Endothelial cell of umbilical vein (primary cell): ENCODE measurements at regions of chr2 and their contacts with region 1.

Region 1: DNA sequence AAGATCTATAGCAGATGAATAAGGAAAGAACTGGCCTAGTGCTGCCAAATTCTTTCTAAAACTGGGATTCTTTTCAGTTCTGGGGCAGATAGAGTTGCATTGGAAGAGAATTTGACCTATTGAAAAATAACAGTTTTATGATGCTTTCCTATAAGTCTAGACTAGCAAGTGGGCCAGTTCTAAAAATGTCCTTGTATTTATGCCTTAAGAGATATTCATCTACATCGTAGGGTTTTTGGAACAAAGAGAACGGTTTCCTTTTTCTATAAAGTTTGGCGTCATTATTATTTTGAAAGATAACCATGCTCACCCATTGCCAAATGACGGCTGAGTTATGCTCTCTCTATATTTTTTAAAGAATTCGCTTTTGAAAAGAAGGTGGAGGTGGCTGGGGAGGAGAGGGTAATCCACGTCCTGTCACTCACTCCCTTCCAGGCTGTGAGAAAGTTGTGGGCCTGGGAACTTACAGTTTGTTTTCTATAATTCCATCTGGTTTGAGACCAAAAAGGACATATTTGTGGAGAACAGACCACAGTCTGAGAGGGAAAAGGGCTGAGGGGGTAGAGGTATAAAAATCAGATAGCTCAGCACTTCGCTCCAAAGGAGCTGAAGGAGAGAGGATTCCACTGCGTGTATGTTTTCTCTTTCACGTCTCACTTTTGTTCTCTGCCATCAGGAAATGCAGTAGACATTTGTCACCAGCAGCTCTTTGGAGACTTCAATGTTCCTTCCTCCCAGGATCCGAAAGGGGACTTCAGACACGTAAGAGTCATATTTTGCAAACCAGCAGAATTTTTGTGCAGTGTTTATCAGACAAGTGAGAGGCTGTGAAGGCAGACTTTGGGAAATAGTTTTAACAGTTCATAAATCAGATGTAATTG is 281.9 kb upstream of the FN1 start:
- DNase-seq: peak; percentile 88
- H3K4me3 ChIP-seq: peak overlapping the region in 1 of 3 experiments; percentile 28
- H3K27ac ChIP-seq: peak overlapping the region; percentile 92
- H3K4me1 ChIP-seq: peaks cover 45% of the 10 kb centered on the region
- H3K27me3 ChIP-seq: no peaks in the 10 kb centered on the region
- CTCF ChIP-seq: no peak
- POLR2A ChIP-seq: no peak

Region 2: GRCh38 chr2:215601990-215602721 is 115.6 kb before region 1 on chr2:
- CTCF ChIA-PET with region 1: no interaction called
- POLR2A ChIA-PET with region 1: no interaction called
- dilution Hi-C with region 1: no loop called
- intact Hi-C with region 1: loop called (anchors 2 kb)
- DNase-seq: peak; percentile 97
- H3K4me3 ChIP-seq: peak overlapping the region in 1 of 3 experiments; percentile 19
- H3K27ac ChIP-seq: peak overlapping the region; percentile 85
- H3K4me1 ChIP-seq: peaks cover 24% of the 10 kb centered on the region
- H3K27me3 ChIP-seq: no peaks in the 10 kb centered on the region
- CTCF ChIP-seq: no peak
- POLR2A ChIP-seq: peak; percentile 62

Region 3: DNA sequence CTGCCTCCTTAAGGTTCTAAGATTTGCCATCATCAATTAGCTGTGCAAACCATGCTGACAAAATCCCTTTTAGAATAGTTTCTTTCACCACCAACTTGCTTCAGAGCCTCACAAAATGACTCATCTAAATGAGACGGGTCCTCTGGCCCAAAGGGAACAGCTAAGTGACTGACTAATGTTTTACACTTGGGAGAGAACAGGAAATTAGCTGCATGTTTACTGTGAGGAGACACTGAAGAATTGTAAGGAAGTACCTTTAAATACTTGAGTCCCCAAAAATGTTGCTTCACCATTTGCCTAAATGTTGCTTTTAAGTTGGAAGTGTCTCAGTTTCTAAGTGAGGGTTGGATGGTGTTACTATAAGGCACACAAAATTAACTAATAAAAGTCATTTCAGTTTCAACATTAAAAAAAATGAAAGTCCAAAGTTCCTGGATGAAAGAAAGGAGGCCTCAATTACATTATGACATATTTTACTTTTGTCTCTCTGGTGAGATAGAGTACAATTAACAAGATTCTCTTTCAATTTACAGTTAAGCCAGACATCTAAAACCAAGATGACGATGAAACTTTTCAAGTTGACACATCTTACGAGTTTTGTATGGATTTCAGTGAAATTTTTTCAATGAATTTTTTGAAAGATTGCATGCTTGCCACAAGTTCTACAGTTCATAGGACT is 52.8 kb before region 1 on chr2:
- CTCF ChIA-PET with region 1: no interaction called
- POLR2A ChIA-PET with region 1: no interaction called
- dilution Hi-C with region 1: no loop called
- intact Hi-C with region 1: loop called (anchors 2 kb)
- DNase-seq: peak; percentile 88
- H3K4me3 ChIP-seq: no peak overlapping the region
- H3K27ac ChIP-seq: peak overlapping the region; percentile 76
- H3K4me1 ChIP-seq: peaks cover 17% of the 10 kb centered on the region
- H3K27me3 ChIP-seq: no peaks in the 10 kb centered on the region
- CTCF ChIP-seq: no peak
- POLR2A ChIP-seq: no peak

Region 4: DNA sequence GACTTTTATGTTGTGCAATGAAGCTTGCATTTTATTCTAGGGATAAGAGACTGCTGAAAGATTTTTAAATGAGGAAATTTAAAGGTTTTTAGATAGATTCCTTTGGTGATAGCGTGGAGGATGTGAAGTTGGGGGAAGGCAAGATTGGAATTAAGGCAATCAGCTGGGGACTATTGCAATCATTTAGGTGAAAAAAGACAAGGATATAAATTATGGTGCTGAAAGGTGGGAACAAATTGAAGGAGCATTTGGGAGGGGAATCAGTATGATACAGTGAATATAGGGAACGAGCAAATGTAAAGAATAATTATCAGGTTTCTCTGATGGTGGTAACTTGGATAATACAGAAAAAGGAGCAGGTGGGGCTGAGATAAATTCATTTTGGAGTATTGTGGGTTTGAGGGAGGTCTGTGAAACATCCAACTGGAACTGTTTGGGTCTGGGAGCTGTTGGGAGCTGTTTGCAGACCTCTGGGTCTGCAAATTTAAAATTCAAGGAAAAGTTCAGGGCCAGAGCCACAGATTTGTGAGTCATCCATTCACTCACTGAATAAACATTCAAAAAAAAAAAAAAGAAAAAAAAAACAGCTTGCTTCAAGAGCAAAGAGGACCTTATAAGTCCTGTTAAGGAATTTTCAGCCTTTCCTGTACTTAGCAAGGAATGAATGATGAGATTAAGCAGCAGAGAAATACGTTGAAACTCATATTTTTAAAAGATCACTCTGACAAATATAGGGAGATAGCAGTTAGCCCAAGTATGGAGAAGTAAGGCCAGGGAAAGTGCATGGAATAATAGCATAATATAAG is 24.3 kb before region 1 on chr2:
- CTCF ChIA-PET with region 1: interaction called, 3 read pairs
- POLR2A ChIA-PET with region 1: no interaction called
- dilution Hi-C with region 1: no loop called
- intact Hi-C with region 1: loop called (anchors 2 kb)
- DNase-seq: peak; percentile 85
- H3K4me3 ChIP-seq: no peak overlapping the region
- H3K27ac ChIP-seq: peak overlapping the region; percentile 83
- H3K4me1 ChIP-seq: peaks cover 33% of the 10 kb centered on the region
- H3K27me3 ChIP-seq: no peaks in the 10 kb centered on the region
- CTCF ChIP-seq: no peak
- POLR2A ChIP-seq: no peak

Region 5: DNA sequence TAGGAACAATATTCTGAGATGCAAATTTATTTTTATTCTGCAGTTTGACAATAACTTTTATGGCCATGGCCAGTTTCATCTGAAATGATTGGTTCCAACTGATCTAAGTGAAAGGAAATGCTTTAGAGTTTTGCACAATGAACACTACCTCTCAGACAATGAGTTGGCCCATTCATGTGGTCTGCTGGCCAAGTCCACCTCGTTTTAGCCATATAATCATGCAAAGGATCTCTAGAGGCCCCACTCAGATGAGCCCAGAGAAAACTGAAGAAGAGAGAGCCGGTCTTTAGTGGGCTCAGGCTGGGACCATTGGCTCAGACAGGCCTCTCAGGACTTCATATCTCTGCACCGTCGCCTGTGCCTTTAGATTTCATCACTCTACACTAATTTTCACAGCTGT is 41.0 kb after region 1 on chr2:
- CTCF ChIA-PET with region 1: no interaction called
- POLR2A ChIA-PET with region 1: interaction called, 3 read pairs
- dilution Hi-C with region 1: no loop called
- intact Hi-C with region 1: loop called (anchors 1 kb)
- DNase-seq: peak; percentile 87
- H3K4me3 ChIP-seq: no peak overlapping the region
- H3K27ac ChIP-seq: peak overlapping the region; percentile 69
- H3K4me1 ChIP-seq: peaks cover 39% of the 10 kb centered on the region
- H3K27me3 ChIP-seq: no peaks in the 10 kb centered on the region
- CTCF ChIP-seq: no peak
- POLR2A ChIP-seq: no peak

Region 6: GRCh38 chr2:215982080-215982875 is 264.5 kb after region 1 on chr2:
- CTCF ChIA-PET with region 1: no interaction called
- POLR2A ChIA-PET with region 1: no interaction called
- dilution Hi-C with region 1: no loop called
- intact Hi-C with region 1: no loop called
- DNase-seq: no peak
- H3K4me3 ChIP-seq: no peak overlapping the region
- H3K27ac ChIP-seq: no peak overlapping the region
- H3K4me1 ChIP-seq: no peaks in the 10 kb centered on the region
- H3K27me3 ChIP-seq: no peaks in the 10 kb centered on the region
- CTCF ChIP-seq: no peak
- POLR2A ChIP-seq: no peak